GM12878 (cell line): ENCODE measurements at regions of chr18 and their contacts with region 1.

Region 1: DNA sequence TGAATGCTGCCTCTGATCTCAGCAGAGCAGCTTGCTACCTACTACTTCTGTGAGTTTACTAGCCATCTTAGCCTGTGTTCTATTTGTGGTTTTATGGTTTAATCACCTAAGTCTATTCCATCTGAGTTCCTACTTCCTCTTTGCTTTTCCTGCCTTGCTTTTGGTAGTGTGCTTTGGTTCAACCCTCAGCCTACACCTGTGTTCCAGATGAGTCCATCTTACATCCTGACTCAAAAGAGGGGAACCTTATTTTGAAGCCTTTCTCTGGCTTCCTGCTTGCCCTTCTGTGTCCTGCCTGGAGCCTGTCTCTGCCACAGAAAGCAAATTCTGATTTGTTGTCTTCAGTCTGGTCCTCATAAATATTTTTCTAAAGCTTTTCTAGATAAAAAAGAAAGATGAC is 530.3 kb upstream of the MEX3C start:
- DNase-seq: no peak
- ATAC-seq: peak; percentile 58
- H3K4me3 ChIP-seq: no peak overlapping the region
- H3K27ac ChIP-seq: peak overlapping the region; percentile 69
- H3K4me1 ChIP-seq: peaks cover 37% of the 10 kb centered on the region
- H3K27me3 ChIP-seq: no peaks in the 10 kb centered on the region
- CTCF ChIP-seq: no peak
- EP300 ChIP-seq: peak in 1 of 2 experiments; percentile 53; a peak in 1 of 4 replicates
- POLR2A ChIP-seq: no peak
- RAD21 ChIP-seq: no peak

Region 2: GRCh38 chr18:51711298-51711889 is 16.4 kb before region 1 on chr18:
- CTCF ChIA-PET with region 1: interaction called, 5 read pairs
- POLR2A ChIA-PET with region 1: no interaction called
- RAD21 ChIA-PET with region 1: interaction called, 19 read pairs
- SMC1A ChIA-PET with region 1: interaction called, 24 read pairs
- in situ Hi-C with region 1: no loop called
- intact Hi-C with region 1: no loop called
- DNase-seq: no peak
- ATAC-seq: peak; percentile 89
- H3K4me3 ChIP-seq: no peak overlapping the region
- H3K27ac ChIP-seq: no peak overlapping the region
- H3K4me1 ChIP-seq: peaks cover 31% of the 10 kb centered on the region
- H3K27me3 ChIP-seq: no peaks in the 10 kb centered on the region
- CTCF ChIP-seq: no peak
- EP300 ChIP-seq: no peak
- POLR2A ChIP-seq: no peak
- RAD21 ChIP-seq: no peak

Region 3: DNA sequence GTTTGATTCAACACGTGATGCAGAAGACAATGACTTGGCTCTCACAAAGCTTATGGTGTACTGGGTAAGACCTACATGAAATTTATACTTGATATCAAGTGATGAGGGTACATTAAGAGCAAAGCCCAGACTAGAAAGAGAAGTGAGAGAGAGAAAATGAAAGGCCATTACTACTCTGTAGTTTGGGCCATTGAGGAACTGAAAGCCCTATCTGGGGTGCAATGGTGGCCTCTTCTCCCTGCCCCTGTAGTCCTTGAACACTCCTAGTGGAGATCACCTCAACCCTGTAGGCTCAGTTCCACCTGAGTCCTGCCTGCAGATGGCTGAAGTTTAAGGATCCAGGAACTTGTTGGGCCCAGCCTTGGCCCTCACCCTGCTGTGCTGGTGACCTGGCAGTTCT is 39.5 kb after region 1 on chr18:
- CTCF ChIA-PET with region 1: interaction called, 3 read pairs
- POLR2A ChIA-PET with region 1: no interaction called
- RAD21 ChIA-PET with region 1: interaction called, 3 read pairs
- SMC1A ChIA-PET with region 1: interaction called, 4 read pairs
- in situ Hi-C with region 1: no loop called
- intact Hi-C with region 1: loop called (anchors 5 kb)
- DNase-seq: no peak
- ATAC-seq: peak; percentile 90
- H3K4me3 ChIP-seq: no peak overlapping the region
- H3K27ac ChIP-seq: peak overlapping the region; percentile 68
- H3K4me1 ChIP-seq: peaks cover 25% of the 10 kb centered on the region
- H3K27me3 ChIP-seq: no peaks in the 10 kb centered on the region
- CTCF ChIP-seq: no peak
- EP300 ChIP-seq: no peak
- POLR2A ChIP-seq: no peak
- RAD21 ChIP-seq: 0 out of 2 replicates have a peak, but pooled peaks have one; percentile 13

Region 4: GRCh38 chr18:52000435-52000834 is 272.7 kb after region 1 on chr18:
- CTCF ChIA-PET with region 1: interaction called, 4 read pairs
- POLR2A ChIA-PET with region 1: interaction called, 4 read pairs
- RAD21 ChIA-PET with region 1: interaction called, 4 read pairs
- SMC1A ChIA-PET with region 1: interaction called, 4 read pairs
- in situ Hi-C with region 1: no loop called
- intact Hi-C with region 1: loop called (anchors 5 kb)
- DNase-seq: no peak
- ATAC-seq: peak; percentile 81
- H3K4me3 ChIP-seq: no peak overlapping the region
- H3K27ac ChIP-seq: no peak overlapping the region
- H3K4me1 ChIP-seq: no peaks in the 10 kb centered on the region
- H3K27me3 ChIP-seq: no peaks in the 10 kb centered on the region
- CTCF ChIP-seq: no peak
- EP300 ChIP-seq: no peak
- POLR2A ChIP-seq: no peak
- RAD21 ChIP-seq: no peak